ENCODE measurements at regions of chr1 and their contacts with region 1.

Region 1: GRCh38 chr1:65209005-65209885 is 61.2 kb downstream of the AK4 start:
- DNase-seq: peak; percentile 50
- CTCF ChIP-seq: peak; percentile 56

Region 2: DNA sequence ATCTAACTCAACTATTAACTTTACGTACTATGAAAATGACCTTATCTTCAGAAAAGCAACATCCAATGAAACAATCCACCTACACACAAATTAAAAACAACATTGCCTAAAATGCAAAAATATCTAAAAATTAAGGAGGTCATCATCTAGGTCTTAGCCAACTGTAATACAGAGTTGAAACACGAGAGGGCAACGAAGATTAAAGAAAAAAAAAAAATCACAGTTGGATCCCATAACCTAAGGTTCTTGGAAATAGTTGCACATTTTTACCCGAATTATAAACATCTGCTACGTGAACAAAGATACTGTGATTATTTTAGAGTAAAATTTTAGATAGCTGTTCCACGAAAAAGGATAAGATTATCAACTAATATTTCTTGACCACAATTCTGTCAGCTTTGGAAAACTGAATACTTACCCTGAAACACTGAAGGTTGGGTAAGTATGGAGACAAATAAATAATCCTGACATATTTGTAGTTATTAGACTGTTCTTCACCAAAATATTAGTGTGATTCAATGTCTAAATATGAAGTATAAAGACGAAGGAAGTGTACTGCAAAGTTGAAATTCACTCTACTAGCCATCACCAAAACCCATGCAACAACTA is 149.2 kb before region 1 on chr1:
- CTCF ChIA-PET with region 1: interaction called, 13 read pairs
- POLR2A ChIA-PET with region 1: no interaction called
- DNase-seq: no peak
- CTCF ChIP-seq: peak; percentile 57

Region 3: GRCh38 chr1:65066766-65067490 is 142.3 kb before region 1 on chr1:
- CTCF ChIA-PET with region 1: interaction called, 13 read pairs
- POLR2A ChIA-PET with region 1: no interaction called
- DNase-seq: peak; percentile 66
- CTCF ChIP-seq: no peak

Region 4: GRCh38 chr1:65083263-65083896 is 125.9 kb before region 1 on chr1:
- CTCF ChIA-PET with region 1: no interaction called
- POLR2A ChIA-PET with region 1: no interaction called
- DNase-seq: no peak
- CTCF ChIP-seq: no peak

Region 5: DNA sequence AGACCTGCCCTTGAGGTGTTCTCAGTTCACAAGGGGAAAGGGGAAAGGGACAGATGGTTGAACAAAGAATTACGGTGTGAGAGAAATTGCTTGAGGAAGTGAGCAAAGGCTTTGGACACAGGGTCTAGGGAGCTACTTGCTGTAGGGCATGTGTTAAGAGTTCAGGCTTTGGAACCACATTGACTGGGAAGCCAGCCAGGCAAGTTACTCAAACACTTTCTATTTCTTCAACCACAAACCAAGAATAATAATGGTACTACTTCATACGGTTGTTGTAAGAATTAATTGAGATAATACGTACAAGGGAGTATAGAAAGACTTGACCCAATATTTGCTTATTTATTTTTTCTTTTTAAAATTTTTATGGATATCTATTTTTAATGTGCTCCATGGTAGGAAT is 34.7 kb before region 1 on chr1:
- CTCF ChIA-PET with region 1: interaction called, 13 read pairs
- POLR2A ChIA-PET with region 1: no interaction called
- DNase-seq: peak; percentile 53
- CTCF ChIP-seq: no peak

Region 6: DNA sequence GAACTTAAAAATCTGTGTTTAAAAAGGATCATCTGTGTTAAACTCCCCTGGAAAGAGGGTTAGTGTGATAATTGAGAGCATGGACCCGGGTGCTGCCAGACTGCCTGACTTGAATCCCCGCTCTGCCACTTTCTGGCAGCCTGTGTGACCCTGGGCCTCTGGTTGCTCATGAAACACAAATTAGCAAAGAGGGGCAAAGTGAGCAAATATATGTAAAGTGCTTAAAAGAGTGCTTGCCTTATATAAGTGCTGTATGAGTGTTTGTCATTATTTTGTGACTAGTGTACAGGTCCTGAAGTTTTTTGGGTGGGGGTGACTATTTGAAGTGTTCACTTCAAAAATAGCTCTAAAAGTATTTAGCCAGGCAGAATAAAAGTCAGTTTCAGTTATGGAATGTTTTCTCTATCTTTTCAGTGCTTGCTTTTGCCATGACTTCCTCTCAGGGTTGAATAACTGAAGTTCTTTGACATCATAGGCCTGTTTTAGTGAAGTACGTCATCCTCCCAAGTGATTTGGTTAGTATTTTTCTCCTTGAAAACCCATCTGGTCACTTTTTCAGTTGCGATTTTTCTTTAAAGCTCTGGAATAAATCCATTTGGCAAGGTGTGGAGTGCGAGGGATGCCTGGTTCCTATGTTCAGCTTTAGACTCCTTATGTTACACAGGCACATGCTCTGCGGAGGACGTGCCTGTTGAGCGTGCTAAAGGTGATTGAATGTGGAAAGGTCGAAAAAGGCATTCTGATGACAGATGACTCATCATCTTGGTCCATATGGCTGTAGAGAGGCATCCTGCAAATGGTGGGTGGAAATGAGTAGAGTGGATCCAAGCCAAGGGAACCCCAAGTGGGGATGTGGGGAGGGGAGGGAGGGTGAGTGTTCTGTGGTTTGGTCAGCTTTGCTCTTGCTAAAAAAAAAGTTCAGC is 13.5 kb before region 1 on chr1:
- CTCF ChIA-PET with region 1: interaction called, 54 read pairs
- POLR2A ChIA-PET with region 1: no interaction called
- DNase-seq: no peak
- CTCF ChIP-seq: no peak

Region 7: DNA sequence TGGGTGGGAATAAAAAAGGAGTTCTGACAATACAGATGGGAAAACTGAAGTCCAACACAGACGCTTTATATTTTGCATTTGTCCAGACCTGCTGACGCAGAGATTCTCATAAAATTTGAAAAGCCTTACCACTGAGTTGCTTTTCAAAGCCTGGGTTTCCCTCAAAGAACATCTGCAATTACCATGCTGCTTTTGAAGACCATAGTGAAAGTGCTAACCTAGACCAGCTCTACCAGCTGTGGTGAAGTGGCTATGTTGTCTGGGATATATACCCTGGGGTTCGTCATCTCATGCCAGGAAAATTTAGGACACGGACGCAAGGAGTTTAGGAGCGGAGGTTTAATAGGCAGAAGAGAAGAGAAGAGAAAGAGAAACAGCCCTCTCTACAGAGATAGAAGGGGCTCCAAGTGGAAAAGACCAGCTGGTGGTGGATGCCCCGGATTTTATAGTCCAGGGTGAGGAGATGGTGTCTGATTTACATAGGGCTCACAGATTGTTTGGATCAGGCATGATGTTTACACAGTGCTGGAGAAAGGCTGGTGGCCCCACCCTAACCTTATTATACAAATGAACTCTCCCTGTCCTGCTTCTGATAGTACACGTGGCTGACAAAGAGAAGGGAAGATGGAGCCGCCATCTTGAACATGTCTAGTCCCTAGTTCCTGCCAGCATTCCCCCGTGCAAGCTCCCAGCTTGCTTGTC is 12.5 kb after region 1 on chr1:
- CTCF ChIA-PET with region 1: interaction called, 37 read pairs
- POLR2A ChIA-PET with region 1: no interaction called
- DNase-seq: no peak
- CTCF ChIP-seq: no peak

Region 8: DNA sequence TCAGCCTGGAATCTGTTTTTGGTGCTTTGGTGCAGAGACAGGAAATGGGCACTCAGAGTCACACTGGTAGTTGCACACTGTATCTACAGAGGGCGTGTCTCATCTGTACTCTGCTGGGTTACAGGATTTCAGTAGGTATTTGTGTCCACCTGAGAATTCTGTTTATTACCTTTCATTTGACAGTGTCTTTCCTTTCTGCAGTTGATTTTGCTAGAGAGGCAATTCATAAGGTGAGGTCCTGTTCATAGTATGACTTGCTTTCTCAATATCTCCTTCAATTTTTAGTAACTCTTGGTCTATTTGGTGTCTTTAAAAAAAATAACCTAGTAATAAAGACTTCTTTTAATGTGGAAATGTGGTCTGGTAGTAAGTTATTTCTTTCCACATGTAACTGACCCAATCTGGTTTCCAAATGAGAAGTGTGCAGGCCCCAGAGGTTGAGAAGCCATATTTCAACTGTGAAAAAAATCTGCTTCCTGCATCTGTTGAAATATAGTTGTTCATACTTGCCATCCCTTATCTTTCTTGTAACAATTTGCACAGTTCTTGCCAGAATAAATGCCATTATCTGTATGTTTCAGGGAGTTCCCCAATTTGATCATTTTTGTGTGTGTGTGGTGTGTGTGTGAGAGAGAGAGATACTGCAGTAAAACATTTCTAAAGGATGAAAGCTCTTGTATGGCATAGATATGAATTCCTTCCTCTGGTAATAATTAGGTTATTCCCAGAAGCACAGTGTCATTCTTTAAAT is 21.7 kb after region 1 on chr1:
- CTCF ChIA-PET with region 1: interaction called, 10 read pairs
- POLR2A ChIA-PET with region 1: no interaction called
- DNase-seq: no peak
- CTCF ChIP-seq: no peak

Measured in GM10248 (cell line).